K562 (cell line): ENCODE measurements at regions of chr16 and their contacts with region 1.

Region 1: DNA sequence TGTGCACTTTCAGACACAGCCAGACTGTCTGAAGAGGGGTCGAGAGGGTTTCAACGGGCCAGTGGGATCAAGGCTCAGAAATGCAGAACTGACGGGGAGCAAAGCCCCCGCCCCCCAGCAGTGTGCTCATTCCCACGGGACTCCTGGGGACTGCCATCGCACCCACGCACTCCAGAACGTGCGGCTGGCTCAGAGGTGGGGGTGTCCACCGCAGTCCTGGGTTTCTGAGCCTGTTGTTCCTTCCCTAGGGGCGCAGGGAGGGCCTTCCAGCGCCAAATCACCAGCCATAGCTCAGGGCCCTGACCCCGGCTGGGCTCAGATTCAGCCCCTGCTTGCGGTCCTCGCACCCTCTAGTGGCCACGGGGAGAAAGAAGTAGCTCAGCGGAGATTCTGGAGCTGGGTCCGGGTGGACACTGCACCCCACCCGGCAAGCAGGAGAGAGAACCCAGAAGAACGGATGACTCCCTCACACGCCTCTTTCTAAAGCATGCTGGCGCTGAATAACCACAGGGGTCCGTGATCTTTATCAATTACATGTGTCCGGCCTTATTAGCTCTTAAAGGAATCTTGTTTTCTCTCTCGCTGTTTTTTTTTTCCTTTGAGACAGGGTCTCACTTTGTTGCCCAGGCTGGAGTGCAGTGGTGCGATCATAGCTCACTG is 45.0 kb upstream of the USP7 start:
- DNase-seq: peak; percentile 84 to 91 (median 89)
- ATAC-seq: peak; percentile 99
- H3K4me3 ChIP-seq: no peak overlapping the region
- H3K27ac ChIP-seq: no peak overlapping the region
- H3K4me1 ChIP-seq: peaks cover 7 to 20% of the 10 kb centered on the region in 2 experiments; a peak in 3 of 5 replicates
- H3K27me3 ChIP-seq: no peaks in the 10 kb centered on the region
- CTCF ChIP-seq: peak; percentile 89 to 95 (median 90)
- EP300 ChIP-seq: no peak
- POLR2A ChIP-seq: no peak
- RAD21 ChIP-seq: peak; percentile 68 to 88

Region 2: DNA sequence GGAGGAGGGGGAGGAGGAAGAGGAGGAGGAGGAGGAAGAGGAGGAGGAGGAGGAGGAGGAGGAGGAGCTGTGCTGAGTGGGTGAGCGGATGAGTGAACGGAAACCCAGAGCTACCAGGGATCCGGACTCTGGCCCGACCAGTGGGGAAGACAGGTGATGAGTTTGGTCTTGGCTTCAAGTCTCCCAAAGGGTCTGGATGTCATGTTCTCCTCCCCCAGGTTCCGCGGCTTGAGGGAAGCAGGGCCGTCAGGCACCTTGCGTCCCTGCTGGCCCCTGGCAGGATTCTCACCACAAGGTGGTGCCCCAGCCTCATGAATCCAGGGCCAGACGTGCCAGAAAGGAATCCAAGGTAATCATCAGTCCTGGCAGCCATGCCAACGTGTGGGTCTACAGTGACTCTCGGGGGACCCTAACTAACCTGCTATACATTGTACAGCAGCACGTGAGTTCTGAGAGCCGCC is 347.9 kb before region 1 on chr16:
- CTCF ChIA-PET with region 1: no interaction called
- POLR2A ChIA-PET with region 1: no interaction called
- in situ Hi-C with region 1: loop called (anchors 10 kb)
- intact Hi-C with region 1: no loop called
- DNase-seq: peak; percentile 36 to 65 (median 48)
- ATAC-seq: peak; percentile 91
- H3K4me3 ChIP-seq: no peak overlapping the region
- H3K27ac ChIP-seq: no peak overlapping the region
- H3K4me1 ChIP-seq: no peaks in the 10 kb centered on the region
- H3K27me3 ChIP-seq: peaks cover 4 to 18% of the 10 kb centered on the region in 2 experiments; a peak in 2 of 5 replicates
- CTCF ChIP-seq: peak; percentile 71 to 72 (median 71)
- EP300 ChIP-seq: no peak
- POLR2A ChIP-seq: no peak
- RAD21 ChIP-seq: peak; percentile 55 to 86

Region 3: GRCh38 chr16:8899709-8900317 is 108.9 kb before region 1 on chr16:
- CTCF ChIA-PET with region 1: no interaction called
- POLR2A ChIA-PET with region 1: interaction called, 3 read pairs
- in situ Hi-C with region 1: loop called (anchors 5 kb)
- intact Hi-C with region 1: loop called (anchors 5 kb)
- DNase-seq: no peak
- ATAC-seq: no peak
- H3K4me3 ChIP-seq: no peak overlapping the region
- H3K27ac ChIP-seq: no peak overlapping the region
- H3K4me1 ChIP-seq: no peaks in the 10 kb centered on the region
- H3K27me3 ChIP-seq: no peaks in the 10 kb centered on the region
- CTCF ChIP-seq: no peak
- EP300 ChIP-seq: no peak
- POLR2A ChIP-seq: no peak
- RAD21 ChIP-seq: no peak

Region 4: DNA sequence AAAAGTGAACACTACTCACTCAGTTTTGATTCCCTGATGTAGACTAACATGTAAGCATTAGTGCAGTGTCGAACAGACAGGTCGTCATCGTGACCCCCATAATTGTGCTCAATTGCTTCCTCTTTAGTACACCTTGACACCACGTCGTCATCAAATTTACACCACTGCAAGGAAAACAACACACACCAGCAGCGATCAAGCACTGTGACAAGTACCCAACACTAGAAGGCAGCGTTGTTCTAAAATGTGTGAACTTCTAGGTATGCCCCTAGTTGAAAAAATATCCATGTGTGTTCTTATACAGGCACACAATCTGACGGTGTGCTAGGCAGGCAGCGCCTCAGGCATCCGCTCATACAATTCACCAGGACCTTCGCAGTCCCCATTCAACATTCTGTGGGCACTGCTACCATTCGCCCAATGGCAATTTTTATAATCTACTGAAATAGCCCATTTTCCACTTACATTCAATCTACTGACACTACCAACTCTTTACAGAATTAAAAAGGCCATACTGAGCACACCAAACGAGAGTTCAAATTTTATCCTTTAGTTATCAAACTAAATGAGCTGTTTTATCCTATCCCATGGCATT is 103.5 kb before region 1 on chr16:
- CTCF ChIA-PET with region 1: no interaction called
- POLR2A ChIA-PET with region 1: interaction called, 3 read pairs
- in situ Hi-C with region 1: loop called (anchors 5 kb)
- intact Hi-C with region 1: loop called (anchors 5 kb)
- DNase-seq: peak in 1 of 4 experiments; percentile 42
- ATAC-seq: peak; percentile 85
- H3K4me3 ChIP-seq: no peak overlapping the region
- H3K27ac ChIP-seq: no peak overlapping the region
- H3K4me1 ChIP-seq: no peaks in the 10 kb centered on the region
- H3K27me3 ChIP-seq: no peaks in the 10 kb centered on the region
- CTCF ChIP-seq: peak; percentile 50 to 69 (median 58); a peak in 5 of 6 replicates
- EP300 ChIP-seq: no peak
- POLR2A ChIP-seq: no peak
- RAD21 ChIP-seq: peak; percentile 27 to 69

Region 5: DNA sequence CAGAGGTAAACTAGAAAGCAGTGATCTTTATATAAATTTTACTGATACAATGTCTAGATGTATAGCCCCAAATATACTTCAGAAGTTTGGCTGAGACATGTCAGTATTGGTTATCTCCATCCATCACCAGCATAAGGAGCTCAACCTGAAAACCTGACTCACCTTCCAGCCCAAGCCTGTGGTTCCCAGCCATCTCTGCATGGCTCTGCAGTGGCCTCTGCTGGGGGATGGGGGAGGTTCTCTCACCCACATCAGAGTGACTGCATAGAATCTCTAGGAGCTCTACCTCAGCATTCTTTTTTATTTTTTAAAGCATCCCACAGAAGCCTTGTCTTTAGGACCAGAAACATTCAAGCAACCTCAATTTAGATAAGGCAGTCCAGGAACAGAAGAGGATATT is 72.3 kb before region 1 on chr16:
- CTCF ChIA-PET with region 1: no interaction called
- POLR2A ChIA-PET with region 1: interaction called, 3 read pairs
- in situ Hi-C with region 1: no loop called
- intact Hi-C with region 1: loop called (anchors 10 kb)
- DNase-seq: peak; percentile 59 to 68 (median 63)
- ATAC-seq: peak; percentile 92
- H3K4me3 ChIP-seq: no peak overlapping the region
- H3K27ac ChIP-seq: no peak overlapping the region
- H3K4me1 ChIP-seq: no peaks in the 10 kb centered on the region; a peak in 2 of 5 replicates
- H3K27me3 ChIP-seq: no peaks in the 10 kb centered on the region
- CTCF ChIP-seq: peak; percentile 70 to 72 (median 71)
- EP300 ChIP-seq: no peak
- POLR2A ChIP-seq: no peak
- RAD21 ChIP-seq: peak; percentile 3 to 53; a peak in 2 of 4 replicates

Region 6: DNA sequence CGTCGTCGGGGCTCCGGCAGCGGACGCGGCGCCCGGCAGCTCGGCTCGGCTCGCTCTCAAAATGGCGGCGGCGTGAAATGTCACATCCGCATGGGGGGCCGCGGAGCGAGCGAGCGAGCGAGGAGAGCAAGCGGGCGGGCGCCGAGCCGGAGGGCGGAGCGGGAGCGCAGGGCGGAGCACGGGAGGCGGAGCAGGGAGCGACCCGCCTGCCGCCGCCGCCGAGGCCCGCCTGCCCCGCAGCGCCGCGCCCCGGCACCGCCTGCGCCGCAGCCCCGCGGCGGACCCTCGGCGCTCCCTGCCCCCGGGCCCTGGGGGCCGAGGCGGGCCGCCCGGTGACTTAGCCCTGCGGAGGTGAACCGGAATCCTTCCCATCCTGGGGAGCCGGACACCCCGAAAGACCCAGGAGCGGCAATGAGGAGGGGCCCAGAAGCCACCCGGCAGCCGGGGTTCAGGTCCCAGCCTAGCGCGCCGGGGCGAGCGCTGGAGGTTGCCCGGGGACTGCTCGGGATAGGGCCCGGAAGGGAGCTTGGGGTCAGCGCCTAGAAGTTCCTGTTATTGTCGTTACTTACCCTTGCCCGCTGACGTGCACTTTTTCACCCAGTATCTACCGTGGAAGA is 44.8 kb before region 1 on chr16 and contains the start of gene USP7:
- CTCF ChIA-PET with region 1: no interaction called
- POLR2A ChIA-PET with region 1: interaction called, 4 read pairs
- in situ Hi-C with region 1: no loop called
- intact Hi-C with region 1: loop called (anchors 5 kb)
- DNase-seq: peak; percentile 93 to 94 (median 93)
- ATAC-seq: peak; percentile 91
- H3K4me3 ChIP-seq: peak within 1 kb of the TSS; percentile 60
- H3K27ac ChIP-seq: peak within 1 kb of the TSS; percentile 65
- H3K4me1 ChIP-seq: peaks cover 32 to 48% of the 10 kb centered on the region in 2 experiments
- H3K27me3 ChIP-seq: no peaks in the 10 kb centered on the region
- CTCF ChIP-seq: 0 out of 6 replicates have a peak, but pooled peaks of 1 of the 3 experiments have one; percentile 4
- EP300 ChIP-seq: no peak
- POLR2A ChIP-seq: peak; percentile 50; the same call in 1 of the 2 replicates
- RAD21 ChIP-seq: no peak
- polyA plus RNA-seq, gene USP7: 17.1 to 27.2 TPM

Region 7: GRCh38 chr16:9039210-9039609 is 30.5 kb after region 1 on chr16:
- CTCF ChIA-PET with region 1: no interaction called
- POLR2A ChIA-PET with region 1: no interaction called
- in situ Hi-C with region 1: no loop called
- intact Hi-C with region 1: no loop called
- DNase-seq: peak in 2 of 4 experiments; percentile 22 to 43
- ATAC-seq: peak; percentile 68
- H3K4me3 ChIP-seq: no peak overlapping the region
- H3K27ac ChIP-seq: no peak overlapping the region
- H3K4me1 ChIP-seq: no peaks in the 10 kb centered on the region
- H3K27me3 ChIP-seq: no peaks in the 10 kb centered on the region; a peak in 1 of 5 replicates
- CTCF ChIP-seq: no peak
- EP300 ChIP-seq: no peak
- POLR2A ChIP-seq: no peak
- RAD21 ChIP-seq: no peak

Region 8: GRCh38 chr16:9077091-9077809 is 68.5 kb after region 1 on chr16:
- CTCF ChIA-PET with region 1: no interaction called
- POLR2A ChIA-PET with region 1: no interaction called
- in situ Hi-C with region 1: no loop called
- intact Hi-C with region 1: no loop called
- DNase-seq: peak in 2 of 4 experiments; percentile 23
- ATAC-seq: peak; percentile 14
- H3K4me3 ChIP-seq: no peak overlapping the region
- H3K27ac ChIP-seq: peak overlapping the region; percentile 91
- H3K4me1 ChIP-seq: peaks cover 23 to 55% of the 10 kb centered on the region in 2 experiments
- H3K27me3 ChIP-seq: no peaks in the 10 kb centered on the region
- CTCF ChIP-seq: no peak
- EP300 ChIP-seq: peak; percentile 60; the same call in 1 of the 2 replicates
- POLR2A ChIP-seq: no peak
- RAD21 ChIP-seq: no peak